GM12878 (cell line): ENCODE measurements at regions of chr9 and their contacts with region 1.

Region 1: DNA sequence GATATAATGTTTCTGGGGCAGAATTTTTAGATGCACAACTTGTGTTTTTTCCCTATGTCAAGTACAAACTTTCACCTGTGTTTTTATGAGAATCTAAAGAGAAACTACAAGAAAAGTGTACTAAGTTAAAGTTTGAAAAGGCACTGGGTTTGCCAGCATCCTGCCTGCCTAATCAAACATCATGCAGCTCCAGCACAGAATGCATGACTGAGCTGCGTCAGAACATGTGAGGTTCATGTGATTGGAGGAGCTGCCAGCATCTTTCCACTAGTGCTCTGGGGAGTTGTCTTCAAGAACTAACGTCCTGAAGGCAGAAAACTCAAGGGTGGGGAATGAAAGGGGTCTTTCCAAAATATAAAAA is 46.1 kb upstream of the RIC1 start:
- DNase-seq: peak; percentile 91
- ATAC-seq: peak; percentile 73
- H3K4me3 ChIP-seq: no peak overlapping the region
- H3K27ac ChIP-seq: peak overlapping the region; percentile 89
- H3K4me1 ChIP-seq: peaks cover 53% of the 10 kb centered on the region
- H3K27me3 ChIP-seq: no peaks in the 10 kb centered on the region
- CTCF ChIP-seq: no peak
- EP300 ChIP-seq: peak in 1 of 2 experiments; percentile 75; a peak in 3 of 4 replicates
- POLR2A ChIP-seq: peak; percentile 14; the same call in 1 of the 2 replicates
- RAD21 ChIP-seq: no peak

Region 2: DNA sequence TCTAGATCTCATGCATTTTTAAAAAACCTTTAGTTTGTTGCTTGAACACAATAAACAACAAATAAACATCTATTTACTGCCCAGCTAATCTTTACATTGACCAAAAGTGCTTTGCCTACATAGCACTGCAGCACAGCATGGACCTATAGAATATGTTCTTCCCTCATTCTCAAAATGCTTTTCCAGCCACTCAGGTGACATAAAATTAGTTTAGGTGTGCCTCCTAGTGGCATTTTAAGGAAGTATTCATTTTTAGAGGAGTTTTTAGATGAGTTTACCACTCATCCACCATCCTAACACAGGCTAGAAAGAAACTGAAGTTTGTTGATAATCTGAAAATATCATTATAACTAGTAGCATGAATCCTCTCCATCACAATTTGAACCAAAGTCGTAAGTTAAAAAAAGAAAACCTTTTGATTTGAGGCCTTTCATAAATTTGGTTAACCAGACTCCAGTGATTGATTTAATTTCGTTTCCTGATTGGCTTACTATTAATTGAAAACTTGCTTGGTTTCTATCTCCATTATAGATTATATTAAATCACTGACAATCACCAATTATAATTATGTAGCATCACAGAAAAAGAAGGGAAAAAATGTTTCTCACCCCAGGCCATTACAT is 157.7 kb before region 1 on chr9:
- CTCF ChIA-PET with region 1: interaction called, 5 read pairs
- POLR2A ChIA-PET with region 1: no interaction called
- RAD21 ChIA-PET with region 1: interaction called, 3 read pairs
- SMC1A ChIA-PET with region 1: interaction called, 11 read pairs
- in situ Hi-C with region 1: no loop called
- intact Hi-C with region 1: no loop called
- DNase-seq: peak; percentile 30
- ATAC-seq: peak; percentile 77
- H3K4me3 ChIP-seq: no peak overlapping the region
- H3K27ac ChIP-seq: no peak overlapping the region
- H3K4me1 ChIP-seq: no peaks in the 10 kb centered on the region
- H3K27me3 ChIP-seq: no peaks in the 10 kb centered on the region
- CTCF ChIP-seq: peak; percentile 45 to 61 (median 56); a peak in 5 of 6 replicates
- EP300 ChIP-seq: no peak
- POLR2A ChIP-seq: no peak
- RAD21 ChIP-seq: peak; percentile 78

Region 3: DNA sequence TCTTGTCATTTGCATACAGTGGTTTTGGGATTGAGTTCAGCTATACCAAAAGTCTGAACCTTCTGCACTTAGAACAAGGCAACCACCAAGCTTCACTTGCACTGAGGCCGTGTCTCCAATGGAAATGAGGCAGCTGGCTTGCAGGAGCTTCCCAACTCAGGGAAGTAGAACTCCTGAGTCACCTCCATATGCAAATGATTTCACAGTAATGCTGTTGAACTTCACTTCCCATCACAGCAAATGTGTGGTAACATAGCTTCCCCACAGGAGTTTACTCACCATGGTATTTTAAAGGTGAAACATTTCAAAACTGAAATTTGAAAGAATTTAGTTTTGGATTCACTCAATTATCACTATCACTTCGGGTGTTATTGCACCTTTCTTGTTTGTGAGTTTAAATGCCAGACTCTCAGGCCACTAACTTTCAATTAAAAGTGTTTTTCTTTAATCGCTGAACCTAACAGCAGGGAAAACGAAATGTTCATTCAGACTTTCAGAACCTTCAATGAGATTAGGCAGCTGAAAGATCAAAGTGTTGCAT is 123.5 kb before region 1 on chr9:
- CTCF ChIA-PET with region 1: interaction called, 8 read pairs
- POLR2A ChIA-PET with region 1: interaction called, 12 read pairs
- RAD21 ChIA-PET with region 1: interaction called, 43 read pairs
- SMC1A ChIA-PET with region 1: interaction called, 74 read pairs
- in situ Hi-C with region 1: no loop called
- intact Hi-C with region 1: no loop called
- DNase-seq: no peak
- ATAC-seq: peak; percentile 55
- H3K4me3 ChIP-seq: peak overlapping the region; percentile 35
- H3K27ac ChIP-seq: peak overlapping the region; percentile 81
- H3K4me1 ChIP-seq: peaks cover 32% of the 10 kb centered on the region
- H3K27me3 ChIP-seq: no peaks in the 10 kb centered on the region
- CTCF ChIP-seq: no peak
- EP300 ChIP-seq: peak; percentile 69 to 84; a peak in 2 of 4 replicates
- POLR2A ChIP-seq: no peak
- RAD21 ChIP-seq: no peak

Region 4: GRCh38 chr9:5493679-5494511 is 88.9 kb before region 1 on chr9:
- CTCF ChIA-PET with region 1: interaction called, 13 read pairs
- POLR2A ChIA-PET with region 1: interaction called, 9 read pairs
- RAD21 ChIA-PET with region 1: interaction called, 51 read pairs
- SMC1A ChIA-PET with region 1: interaction called, 47 read pairs
- in situ Hi-C with region 1: no loop called
- intact Hi-C with region 1: no loop called
- DNase-seq: peak; percentile 96
- ATAC-seq: peak; percentile 91
- H3K4me3 ChIP-seq: peak overlapping the region; percentile 30; the same call in 1 of the 2 replicates
- H3K27ac ChIP-seq: peak overlapping the region; percentile 92
- H3K4me1 ChIP-seq: peaks cover 16% of the 10 kb centered on the region
- H3K27me3 ChIP-seq: no peaks in the 10 kb centered on the region
- CTCF ChIP-seq: no peak
- EP300 ChIP-seq: peak in 1 of 2 experiments; percentile 65; a peak in 1 of 4 replicates
- POLR2A ChIP-seq: peak; percentile 63
- RAD21 ChIP-seq: 0 out of 2 replicates have a peak, but pooled peaks have one; percentile 9

Region 5: DNA sequence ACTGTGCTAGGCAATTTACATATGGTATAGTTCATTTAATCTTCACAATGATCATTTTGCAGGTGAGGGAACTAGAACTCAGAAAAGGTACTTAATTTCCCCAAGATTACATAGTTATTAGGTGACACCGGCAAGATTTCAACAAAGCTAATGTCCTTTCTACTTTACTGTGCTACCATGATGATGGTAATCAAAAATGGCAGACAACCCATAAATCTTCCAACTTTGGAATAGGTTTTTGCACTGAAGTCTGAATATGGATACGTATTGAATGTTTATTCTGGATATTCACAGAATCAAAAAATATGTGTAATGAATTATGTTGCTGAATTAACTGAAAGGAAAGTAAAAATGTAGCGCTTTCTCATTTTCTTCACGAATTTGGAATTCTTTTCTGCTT is 58.7 kb before region 1 on chr9:
- CTCF ChIA-PET with region 1: interaction called, 19 read pairs
- POLR2A ChIA-PET with region 1: interaction called, 66 read pairs
- RAD21 ChIA-PET with region 1: interaction called, 46 read pairs
- SMC1A ChIA-PET with region 1: interaction called, 311 read pairs
- in situ Hi-C with region 1: no loop called
- intact Hi-C with region 1: no loop called
- DNase-seq: no peak
- ATAC-seq: no peak
- H3K4me3 ChIP-seq: no peak overlapping the region
- H3K27ac ChIP-seq: no peak overlapping the region
- H3K4me1 ChIP-seq: peaks cover 18% of the 10 kb centered on the region
- H3K27me3 ChIP-seq: no peaks in the 10 kb centered on the region
- CTCF ChIP-seq: no peak
- EP300 ChIP-seq: no peak
- POLR2A ChIP-seq: no peak
- RAD21 ChIP-seq: no peak

Region 6: GRCh38 chr9:5566054-5566618 is 16.7 kb before region 1 on chr9:
- CTCF ChIA-PET with region 1: interaction called, 16 read pairs
- POLR2A ChIA-PET with region 1: interaction called, 30 read pairs
- RAD21 ChIA-PET with region 1: interaction called, 164 read pairs
- SMC1A ChIA-PET with region 1: interaction called, 389 read pairs
- in situ Hi-C with region 1: no loop called
- intact Hi-C with region 1: loop called (anchors 2 kb)
- DNase-seq: peak; percentile 91
- ATAC-seq: peak; percentile 91
- H3K4me3 ChIP-seq: no peak overlapping the region
- H3K27ac ChIP-seq: peak overlapping the region; percentile 80
- H3K4me1 ChIP-seq: peaks cover 39% of the 10 kb centered on the region
- H3K27me3 ChIP-seq: no peaks in the 10 kb centered on the region
- CTCF ChIP-seq: no peak
- EP300 ChIP-seq: 0 out of 4 replicates have a peak, but pooled peaks of 1 of the 2 experiments have one; percentile 49
- POLR2A ChIP-seq: no peak
- RAD21 ChIP-seq: no peak

Region 7: GRCh38 chr9:6008169-6008979 is 425.6 kb after region 1 on chr9:
- CTCF ChIA-PET with region 1: no interaction called
- POLR2A ChIA-PET with region 1: no interaction called
- RAD21 ChIA-PET with region 1: no interaction called
- SMC1A ChIA-PET with region 1: no interaction called
- in situ Hi-C with region 1: no loop called
- intact Hi-C with region 1: no loop called
- DNase-seq: peak; percentile 88
- ATAC-seq: peak; percentile 74
- H3K4me3 ChIP-seq: peak overlapping the region; percentile 82
- H3K27ac ChIP-seq: peak overlapping the region; percentile 66
- H3K4me1 ChIP-seq: peaks cover 12% of the 10 kb centered on the region
- H3K27me3 ChIP-seq: no peaks in the 10 kb centered on the region
- CTCF ChIP-seq: no peak
- EP300 ChIP-seq: no peak
- POLR2A ChIP-seq: peak; percentile 55
- RAD21 ChIP-seq: no peak